ENCODE measurements at regions of chr22 and their contacts with region 1.

Region 1: GRCh38 chr22:42169055-42169469 is 38.5 kb upstream of the CYP2D6 start:
- DNase-seq: peak in 1 of 2 experiments; percentile 56
- H3K4me3 ChIP-seq: no peak overlapping the region
- H3K27ac ChIP-seq: no peak overlapping the region
- H3K4me1 ChIP-seq: no peaks in the 10 kb centered on the region
- H3K27me3 ChIP-seq: no peaks in the 10 kb centered on the region
- CTCF ChIP-seq: peak; percentile 93

Region 2: GRCh38 chr22:42544686-42545085 is 375.6 kb after region 1 on chr22:
- CTCF ChIA-PET with region 1: interaction called, 16 read pairs
- POLR2A ChIA-PET with region 1: no interaction called
- intact Hi-C with region 1: no loop called
- DNase-seq: peak in 1 of 2 experiments; percentile 34
- H3K4me3 ChIP-seq: no peak overlapping the region
- H3K27ac ChIP-seq: no peak overlapping the region
- H3K4me1 ChIP-seq: 0 out of 2 replicates have a peak, but pooled peaks cover 2% of the 10 kb centered on the region
- H3K27me3 ChIP-seq: no peaks in the 10 kb centered on the region
- CTCF ChIP-seq: no peak